ENCODE measurements at regions of chr3 and their contacts with region 1.

Region 1: GRCh38 chr3:196406811-196407470 is 25.3 kb downstream of the UBXN7 start:
- DNase-seq: no peak
- ATAC-seq: peak in 2 of 8 donors; percentile 44 to 52
- H3K4me3 ChIP-seq: no peak overlapping the region
- H3K27ac ChIP-seq: no peak overlapping the region
- H3K4me1 ChIP-seq: peaks cover 0 to 7% (median 0%) of the 10 kb centered on the region in 9 donors
- H3K27me3 ChIP-seq: no peaks in the 10 kb centered on the region
- CTCF ChIP-seq: no peak

Region 2: GRCh38 chr3:196365736-196366135 is 41.2 kb before region 1 on chr3:
- intact Hi-C with region 1: loop called in 1 of 10 experiments (anchors 1 kb)
- DNase-seq: no peak
- ATAC-seq: no peak
- H3K4me3 ChIP-seq: no peak overlapping the region
- H3K27ac ChIP-seq: peak overlapping the region in 1 of 10 donors; percentile 10
- H3K4me1 ChIP-seq: peaks cover 0 to 18% (median 0%) of the 10 kb centered on the region in 9 donors
- H3K27me3 ChIP-seq: no peaks in the 10 kb centered on the region
- CTCF ChIP-seq: no peak